Activated CD4-positive, alpha-beta T cell treated with anti-CD3 and anti-CD28 coated beads for 36 hours (primary cell): ENCODE measurements at regions of chr16 and their contacts with region 1.

Region 1: DNA sequence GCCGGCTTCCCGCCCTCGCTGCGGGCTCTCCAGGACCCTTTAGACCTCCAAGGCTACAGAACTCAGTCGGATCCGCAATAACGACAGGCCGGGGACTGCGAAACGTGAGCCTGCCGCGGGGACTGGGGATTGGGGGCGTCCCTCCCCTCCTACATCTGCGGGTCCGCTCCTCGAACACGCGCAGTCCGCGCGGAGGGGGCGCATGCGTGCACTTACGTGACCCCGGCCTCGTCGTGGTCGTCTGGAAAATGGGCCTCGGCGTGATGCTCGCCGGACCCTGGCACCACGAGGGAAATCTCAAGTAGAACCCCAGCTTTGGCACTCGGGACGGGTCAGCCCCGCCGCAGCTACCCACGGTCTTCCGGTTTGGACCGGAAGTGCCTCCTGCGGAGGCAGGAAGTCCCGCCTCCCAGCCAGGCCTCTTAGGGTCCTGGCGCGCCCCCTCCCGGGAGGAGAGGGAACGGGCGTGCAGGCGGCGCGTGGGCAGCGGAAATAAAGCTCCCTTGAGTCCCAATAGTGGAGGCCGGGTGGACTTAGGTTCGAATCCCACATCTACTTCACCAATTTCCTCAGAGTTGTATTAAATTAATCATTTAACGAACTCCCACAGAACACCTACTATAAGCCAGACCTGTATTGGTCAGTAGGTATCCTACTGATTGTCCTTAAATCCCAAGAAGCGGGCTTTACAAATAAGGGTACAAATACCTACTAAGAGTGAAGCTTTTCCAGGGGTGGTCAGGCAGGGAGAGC is at the start of gene TAF1C:
- DNase-seq: peak; percentile 95
- ATAC-seq: peak; percentile 96
- H3K4me3 Mint-ChIP-seq: peak within 1 kb of the TSS; percentile 94
- H3K27ac Mint-ChIP-seq: peak within 1 kb of the TSS; percentile 94
- H3K4me1 Mint-ChIP-seq: peaks cover 16% of the 10 kb centered on the region
- H3K27me3 Mint-ChIP-seq: no peaks in the 10 kb centered on the region
- total RNA-seq, gene TAF1C: 44.4 to 45.7 TPM

Region 2: DNA sequence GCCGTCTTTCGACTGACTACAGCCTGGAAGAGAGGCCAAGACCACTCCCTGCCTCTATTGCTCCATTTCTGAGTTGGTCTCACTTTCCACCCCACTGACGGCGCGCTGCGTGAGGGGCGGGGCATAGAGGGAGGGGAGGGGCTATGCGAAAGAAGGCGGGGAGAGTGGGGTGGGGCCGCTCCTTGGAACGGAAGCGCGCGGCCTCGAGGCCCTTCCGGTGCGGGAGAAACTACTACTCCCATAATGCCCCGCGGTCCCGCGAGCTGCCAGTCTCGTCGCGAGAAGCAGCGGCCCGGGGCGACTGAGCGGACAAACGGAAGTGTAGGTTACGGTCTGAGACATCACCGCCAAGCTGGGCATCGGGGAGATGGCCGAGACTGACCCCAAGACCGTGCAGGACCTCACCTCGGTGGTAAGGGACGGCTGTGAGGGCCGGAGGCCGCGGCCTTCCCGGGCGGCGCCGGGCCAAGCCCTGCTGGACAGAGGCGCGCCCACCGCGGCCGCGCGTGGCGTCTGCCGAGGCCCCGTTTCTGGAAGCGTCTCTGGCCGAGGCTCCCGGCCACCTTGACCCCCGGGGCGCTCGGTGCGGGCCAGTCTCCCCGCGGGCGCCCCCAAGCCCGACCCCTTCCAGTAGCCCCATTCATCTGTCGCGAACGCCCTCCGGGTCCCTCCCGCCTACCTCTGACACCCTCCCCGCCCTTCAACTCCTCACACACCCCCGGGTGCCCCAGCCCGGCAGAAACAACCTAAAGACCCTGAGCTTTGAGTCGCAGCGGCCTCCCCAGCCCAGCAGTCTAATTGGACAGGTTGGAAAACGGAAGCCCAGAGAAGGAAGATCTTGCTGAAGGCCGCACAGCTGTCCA is 378.9 kb before region 1 on chr16 and contains the start of gene HSBP1:
- CTCF ChIA-PET with region 1: no interaction called
- POLR2A ChIA-PET with region 1: no interaction called
- intact Hi-C with region 1: loop called in 1 of 2 experiments (anchors 1 kb)
- DNase-seq: peak; percentile 97
- ATAC-seq: peak; percentile 98
- H3K4me3 Mint-ChIP-seq: peak within 1 kb of the TSS; percentile 98
- H3K27ac Mint-ChIP-seq: peak within 1 kb of the TSS; percentile 93
- H3K4me1 Mint-ChIP-seq: peaks cover 31% of the 10 kb centered on the region
- H3K27me3 Mint-ChIP-seq: peaks cover under 1% of the 10 kb centered on the region
- total RNA-seq, gene HSBP1: 73.1 to 80.7 TPM

Region 3: DNA sequence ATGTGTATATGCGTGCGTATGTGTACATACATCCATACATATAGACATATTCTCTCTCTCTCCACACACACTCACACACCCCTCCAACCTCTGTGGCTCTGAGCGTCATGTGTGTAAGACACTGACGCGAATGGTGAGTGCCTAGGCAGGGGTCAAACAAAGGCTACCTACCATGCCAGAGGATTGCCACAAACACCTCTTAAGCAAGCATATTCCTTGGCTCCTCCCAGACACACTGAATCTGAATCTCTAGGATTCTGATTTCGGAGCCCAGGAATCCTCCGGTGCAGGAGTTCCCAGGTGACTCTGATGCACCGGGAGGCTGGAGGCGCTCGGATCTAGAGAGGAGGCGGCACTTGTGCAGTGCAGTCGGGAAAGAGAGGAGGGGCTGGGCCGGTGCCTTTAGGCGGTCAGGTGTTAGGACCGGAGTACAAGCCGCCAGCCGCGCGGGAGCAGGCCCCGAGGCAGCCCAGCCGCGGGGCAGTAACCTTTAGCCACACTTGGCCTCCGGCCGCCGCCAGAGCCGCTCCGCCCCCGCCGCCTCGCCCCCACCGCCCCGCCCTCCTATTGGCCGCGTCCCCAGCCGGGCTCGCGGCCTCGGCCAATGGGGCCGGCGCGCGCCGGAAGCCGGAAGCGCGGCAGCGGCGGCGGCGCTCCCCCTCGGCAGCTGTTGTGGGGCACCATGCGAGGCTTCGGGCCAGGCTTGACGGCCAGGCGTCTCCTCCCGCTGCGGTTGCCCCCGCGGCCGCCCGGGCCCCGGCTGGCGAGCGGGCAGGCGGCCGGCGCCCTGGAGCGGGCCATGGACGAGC is 288.2 kb before region 1 on chr16 and contains the start of gene MLYCD:
- CTCF ChIA-PET with region 1: no interaction called
- POLR2A ChIA-PET with region 1: no interaction called
- intact Hi-C with region 1: loop called in 1 of 2 experiments (anchors 1 kb)
- DNase-seq: peak; percentile 82
- ATAC-seq: peak; percentile 95
- H3K4me3 Mint-ChIP-seq: peak within 1 kb of the TSS; percentile 96
- H3K27ac Mint-ChIP-seq: peak within 1 kb of the TSS; percentile 83
- H3K4me1 Mint-ChIP-seq: peaks cover 28% of the 10 kb centered on the region
- H3K27me3 Mint-ChIP-seq: peaks cover 3% of the 10 kb centered on the region
- total RNA-seq, gene MLYCD: 3.3 to 3.8 TPM

Region 4: GRCh38 chr16:84084570-84085270 is 102.1 kb before region 1 on chr16:
- CTCF ChIA-PET with region 1: interaction called, 65 read pairs
- POLR2A ChIA-PET with region 1: interaction called, 4 read pairs
- intact Hi-C with region 1: loop called (anchors 1 kb)
- DNase-seq: peak; percentile 83
- ATAC-seq: peak; percentile 79
- H3K4me3 Mint-ChIP-seq: no peak overlapping the region
- H3K27ac Mint-ChIP-seq: no peak overlapping the region
- H3K4me1 Mint-ChIP-seq: peaks cover 40% of the 10 kb centered on the region
- H3K27me3 Mint-ChIP-seq: no peaks in the 10 kb centered on the region

Region 5: DNA sequence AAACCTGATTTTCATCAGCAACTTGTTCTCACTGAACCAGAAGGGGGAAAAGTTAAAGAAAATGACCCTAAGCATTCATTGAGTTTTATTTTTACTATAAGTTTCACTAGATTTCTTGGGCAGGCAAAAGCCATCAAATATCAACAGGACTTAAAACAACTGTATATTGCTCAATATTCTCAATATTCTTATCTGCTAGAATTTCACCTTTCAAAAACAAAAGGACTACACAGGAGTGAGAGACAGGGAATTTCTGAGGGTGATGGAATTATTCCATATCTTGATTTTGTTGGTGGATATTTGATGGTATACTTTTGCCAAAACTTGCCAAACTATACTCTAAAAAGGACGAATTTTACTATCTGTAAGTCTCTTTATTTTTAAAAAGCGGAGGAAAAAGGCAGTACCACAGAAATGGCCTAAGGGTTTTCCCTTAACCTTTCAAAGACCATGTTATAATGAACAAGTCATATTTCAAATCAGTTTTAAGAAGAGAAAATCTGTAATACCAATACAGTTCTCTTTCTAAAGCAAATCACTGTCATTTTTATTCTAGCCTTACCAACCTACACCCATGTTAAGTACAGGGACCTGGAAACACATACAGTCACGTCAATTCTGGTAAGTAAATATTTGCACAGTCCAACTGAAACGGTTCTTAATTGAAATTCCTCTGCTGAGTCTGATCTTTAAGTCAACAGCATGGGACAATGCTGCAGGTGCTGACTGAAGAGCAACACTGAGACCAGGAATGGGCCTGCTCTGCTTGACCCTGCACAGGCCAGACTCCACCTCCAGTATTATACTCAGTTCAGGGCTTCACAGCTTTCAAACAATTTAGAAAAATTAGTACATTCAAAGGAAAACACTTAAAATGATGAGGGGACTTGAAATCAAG is 90.5 kb before region 1 on chr16:
- CTCF ChIA-PET with region 1: interaction called, 9 read pairs
- POLR2A ChIA-PET with region 1: no interaction called
- intact Hi-C with region 1: loop called in 1 of 2 experiments (anchors 1 kb)
- DNase-seq: no peak
- ATAC-seq: no peak
- H3K4me3 Mint-ChIP-seq: no peak overlapping the region
- H3K27ac Mint-ChIP-seq: no peak overlapping the region
- H3K4me1 Mint-ChIP-seq: peaks cover 21% of the 10 kb centered on the region
- H3K27me3 Mint-ChIP-seq: no peaks in the 10 kb centered on the region

Region 6: GRCh38 chr16:84144859-84145639 is 41.8 kb before region 1 on chr16 and contains the starts of genes DNAAF1 and HSDL1:
- CTCF ChIA-PET with region 1: interaction called, 4 read pairs
- POLR2A ChIA-PET with region 1: no interaction called
- intact Hi-C with region 1: loop called (anchors 1 to 2 kb)
- DNase-seq: peak; percentile 96
- ATAC-seq: peak; percentile 84
- H3K4me3 Mint-ChIP-seq: peak within 1 kb of the TSS; percentile 95
- H3K27ac Mint-ChIP-seq: peak within 1 kb of the TSS; percentile 72
- H3K4me1 Mint-ChIP-seq: peaks cover 12% of the 10 kb centered on the region
- H3K27me3 Mint-ChIP-seq: peaks cover 4% of the 10 kb centered on the region
- total RNA-seq, gene DNAAF1: 0.39 TPM in 1 of 2 experiments, not detected in the other
- total RNA-seq, gene HSDL1: 7.4 to 11.4 TPM

Region 7: GRCh38 chr16:84175350-84176081 is 11.3 kb before region 1 on chr16:
- CTCF ChIA-PET with region 1: interaction called, 21 read pairs
- POLR2A ChIA-PET with region 1: interaction called, 3 read pairs
- intact Hi-C with region 1: no loop called
- DNase-seq: peak; percentile 81
- ATAC-seq: peak; percentile 93
- H3K4me3 Mint-ChIP-seq: no peak overlapping the region
- H3K27ac Mint-ChIP-seq: no peak overlapping the region
- H3K4me1 Mint-ChIP-seq: peaks cover 19% of the 10 kb centered on the region
- H3K27me3 Mint-ChIP-seq: peaks cover 2% of the 10 kb centered on the region

Region 8: DNA sequence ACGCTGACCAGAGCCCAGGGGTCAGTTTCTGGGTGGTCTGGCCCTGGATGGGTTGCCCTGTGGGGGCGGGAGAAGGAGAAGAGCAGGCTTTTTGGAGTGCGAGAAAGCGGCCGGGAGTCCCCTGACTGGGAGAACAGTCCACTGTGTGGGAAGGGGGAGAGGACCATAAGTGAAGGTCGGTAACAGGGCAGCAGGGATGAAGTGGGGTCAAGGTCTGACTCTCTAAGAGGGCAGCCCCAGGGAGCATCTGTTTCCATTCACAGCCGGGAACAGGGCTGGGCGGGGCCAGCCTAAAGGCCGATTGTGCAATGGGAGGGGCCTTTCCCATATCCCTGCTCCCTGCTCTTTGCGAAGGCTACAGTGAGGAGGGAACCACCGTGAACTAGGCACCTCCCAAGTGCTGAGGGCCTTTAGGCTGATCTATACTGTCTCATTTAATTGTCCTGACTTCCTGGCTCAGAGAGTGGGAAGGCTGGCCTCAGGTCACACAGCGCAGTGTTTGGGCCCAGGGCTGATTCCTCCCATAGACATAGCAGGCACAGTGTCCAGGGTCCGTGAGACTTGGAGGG is 97.4 kb after region 1 on chr16:
- CTCF ChIA-PET with region 1: no interaction called
- POLR2A ChIA-PET with region 1: no interaction called
- intact Hi-C with region 1: no loop called
- DNase-seq: no peak
- ATAC-seq: no peak
- H3K4me3 Mint-ChIP-seq: no peak overlapping the region
- H3K27ac Mint-ChIP-seq: no peak overlapping the region
- H3K4me1 Mint-ChIP-seq: no peaks in the 10 kb centered on the region
- H3K27me3 Mint-ChIP-seq: peaks cover 5% of the 10 kb centered on the region